CD4-positive, alpha-beta T cell (primary cell): ENCODE measurements at regions of chr6 and their contacts with region 1.

Region 1: DNA sequence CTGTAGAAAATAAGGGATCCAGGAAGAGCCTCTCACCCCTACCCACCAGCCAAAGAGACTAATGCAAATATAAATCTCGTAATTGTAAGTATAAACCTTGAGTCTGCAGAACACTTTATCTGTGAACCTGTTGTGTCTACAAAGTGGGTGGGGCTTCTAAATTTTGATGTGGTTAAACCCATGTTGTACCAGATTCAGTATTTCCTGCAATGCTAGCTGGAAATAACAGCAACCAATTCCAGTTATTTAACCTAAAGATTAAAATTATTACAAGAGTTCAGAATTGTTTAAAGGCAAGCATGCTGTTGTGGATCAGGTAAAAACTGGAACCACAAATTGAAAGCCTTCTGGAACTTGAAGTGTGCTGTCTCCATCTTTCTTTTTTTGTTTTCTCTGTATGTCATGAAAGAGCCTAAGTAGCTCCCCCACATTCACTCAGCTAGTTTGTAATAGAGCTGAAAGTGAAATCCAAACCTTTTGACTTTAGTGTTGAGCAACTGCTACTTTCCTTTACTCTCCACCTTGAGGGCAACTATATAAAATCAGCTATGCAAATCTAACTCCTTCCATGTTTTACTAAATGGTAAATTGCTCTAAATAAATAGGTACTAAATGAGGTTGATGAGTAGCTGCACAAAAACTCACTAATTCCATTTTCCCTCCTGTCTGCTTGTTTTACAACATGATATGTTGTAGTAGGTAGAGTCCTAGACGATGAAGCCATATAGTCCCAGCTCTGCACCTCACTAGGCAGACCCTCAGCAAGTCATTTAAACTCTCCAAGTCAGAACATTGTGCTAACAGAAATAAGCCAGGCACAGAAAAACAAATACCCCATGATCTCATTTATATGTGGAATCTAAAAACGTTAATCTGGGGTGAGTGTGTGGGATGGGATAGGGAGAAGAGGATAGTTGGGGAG is 17.9 kb upstream of the THEMIS start:
- DNase-seq: peak in 5 of 14 experiments; percentile 22 to 83 (median 72)
- ATAC-seq: peak; percentile 83
- H3K4me3 ChIP-seq: peak overlapping the region; percentile 64
- H3K4me3 Mint-ChIP-seq: peak overlapping the region; percentile 90
- H3K27ac ChIP-seq: peak overlapping the region; percentile 40 to 49
- H3K27ac Mint-ChIP-seq: peak overlapping the region; percentile 98
- H3K4me1 ChIP-seq: peaks cover 51% of the 10 kb centered on the region
- H3K4me1 Mint-ChIP-seq: peaks cover 89% of the 10 kb centered on the region
- H3K27me3 ChIP-seq: no peaks in the 10 kb centered on the region
- H3K27me3 Mint-ChIP-seq: no peaks in the 10 kb centered on the region
- CTCF ChIP-seq: no peak

Region 2: GRCh38 chr6:127539272-127539671 is 379.5 kb before region 1 on chr6:
- CTCF ChIA-PET with region 1: no interaction called
- POLR2A ChIA-PET with region 1: no interaction called
- intact Hi-C with region 1: no loop called
- DNase-seq: peak in 3 of 14 experiments; percentile 25 to 31 (median 28)
- ATAC-seq: peak; percentile 55
- H3K4me3 ChIP-seq: no peak overlapping the region
- H3K4me3 Mint-ChIP-seq: no peak overlapping the region
- H3K27ac ChIP-seq: no peak overlapping the region
- H3K27ac Mint-ChIP-seq: no peak overlapping the region
- H3K4me1 ChIP-seq: no peaks in the 10 kb centered on the region
- H3K4me1 Mint-ChIP-seq: no peaks in the 10 kb centered on the region
- H3K27me3 ChIP-seq: peaks cover 0 to 13% of the 10 kb centered on the region in 2 experiments
- H3K27me3 Mint-ChIP-seq: peaks cover 10% of the 10 kb centered on the region
- CTCF ChIP-seq: peak; percentile 67

Region 3: DNA sequence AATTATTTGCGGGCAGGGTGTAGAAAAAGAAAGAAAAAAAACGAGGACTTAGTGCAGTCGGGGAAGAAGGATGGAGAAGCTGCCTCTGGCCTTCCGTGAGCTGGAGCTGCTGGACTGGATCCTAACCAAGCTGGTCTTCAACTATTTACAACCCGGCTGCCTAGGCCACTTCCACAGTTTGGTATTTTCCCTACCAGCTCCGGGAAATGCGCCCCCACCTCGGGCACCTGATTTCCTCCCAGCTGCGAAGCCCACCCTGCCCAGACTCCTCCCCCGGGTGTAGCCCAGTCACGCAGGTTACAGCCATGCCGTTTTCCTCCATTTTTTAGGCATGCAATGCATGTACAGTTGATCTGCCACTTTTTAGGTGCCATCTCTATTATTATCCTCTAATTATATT is 39.1 kb before region 1 on chr6:
- CTCF ChIA-PET with region 1: interaction called, 3 read pairs
- POLR2A ChIA-PET with region 1: interaction called, 5 read pairs
- intact Hi-C with region 1: loop called (anchors 5 kb)
- DNase-seq: peak in 3 of 14 experiments; percentile 10 to 55 (median 36)
- ATAC-seq: peak; percentile 31
- H3K4me3 ChIP-seq: no peak overlapping the region
- H3K4me3 Mint-ChIP-seq: peak overlapping the region; percentile 69
- H3K27ac ChIP-seq: no peak overlapping the region
- H3K27ac Mint-ChIP-seq: peak overlapping the region; percentile 74
- H3K4me1 ChIP-seq: peaks cover 10% of the 10 kb centered on the region
- H3K4me1 Mint-ChIP-seq: peaks cover 89% of the 10 kb centered on the region
- H3K27me3 ChIP-seq: no peaks in the 10 kb centered on the region
- H3K27me3 Mint-ChIP-seq: no peaks in the 10 kb centered on the region
- CTCF ChIP-seq: no peak

Region 4: GRCh38 chr6:127907960-127908640 is 10.7 kb before region 1 on chr6:
- CTCF ChIA-PET with region 1: interaction called, 7 read pairs
- POLR2A ChIA-PET with region 1: interaction called, 81 read pairs
- intact Hi-C with region 1: loop called in 1 of 2 experiments (anchors 2 kb)
- DNase-seq: peak in 5 of 14 experiments; percentile 10 to 67 (median 53)
- ATAC-seq: peak; percentile 75
- H3K4me3 ChIP-seq: peak overlapping the region; percentile 62
- H3K4me3 Mint-ChIP-seq: peak overlapping the region; percentile 86
- H3K27ac ChIP-seq: peak overlapping the region in 1 of 2 donors; percentile 79
- H3K27ac Mint-ChIP-seq: peak overlapping the region; percentile 94
- H3K4me1 ChIP-seq: peaks cover 10% of the 10 kb centered on the region
- H3K4me1 Mint-ChIP-seq: peaks cover 71% of the 10 kb centered on the region
- H3K27me3 ChIP-seq: no peaks in the 10 kb centered on the region
- H3K27me3 Mint-ChIP-seq: no peaks in the 10 kb centered on the region
- CTCF ChIP-seq: no peak

Region 5: DNA sequence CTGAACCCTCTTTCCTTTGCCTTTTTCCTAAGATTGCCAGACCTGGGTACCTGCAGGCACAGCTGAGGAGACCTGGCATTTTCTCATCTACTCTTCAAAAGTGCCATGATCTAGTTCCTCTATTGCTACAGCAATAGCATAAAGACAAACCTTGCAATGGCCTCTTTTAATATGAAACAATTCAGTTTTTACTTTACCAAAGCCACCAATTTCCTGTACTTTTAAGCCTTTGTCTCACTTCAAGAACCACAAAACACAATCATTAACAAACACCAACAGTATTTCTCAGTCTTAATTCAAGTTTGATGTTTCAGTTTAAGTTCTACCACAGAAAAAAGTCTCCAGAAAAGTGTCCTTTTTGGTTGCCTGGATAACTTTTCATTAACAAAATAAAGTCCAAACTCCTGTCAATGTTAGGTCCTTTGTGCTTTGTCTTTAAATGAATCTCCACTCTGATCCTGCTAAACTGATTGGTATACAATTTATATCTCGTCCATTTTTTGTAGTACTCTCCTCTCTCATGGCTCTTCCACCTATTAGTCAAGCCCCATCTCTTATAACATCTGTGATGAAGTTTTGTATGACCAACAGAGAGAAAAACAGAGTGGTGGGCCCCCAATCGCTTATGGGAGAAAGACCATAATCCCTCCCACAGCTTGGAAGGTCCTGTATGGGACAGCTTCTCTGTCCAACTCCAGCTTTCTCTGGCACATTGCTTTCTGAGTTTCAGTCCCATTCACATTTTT is 32.6 kb after region 1 on chr6:
- CTCF ChIA-PET with region 1: interaction called, 3 read pairs
- POLR2A ChIA-PET with region 1: interaction called, 4 read pairs
- intact Hi-C with region 1: loop called in 1 of 2 experiments (anchors 2 kb)
- DNase-seq: peak in 3 of 14 experiments; percentile 53 to 79 (median 59)
- ATAC-seq: peak; percentile 80
- H3K4me3 ChIP-seq: peak overlapping the region; percentile 13
- H3K4me3 Mint-ChIP-seq: peak overlapping the region; percentile 62
- H3K27ac ChIP-seq: peak overlapping the region; percentile 36 to 42
- H3K27ac Mint-ChIP-seq: peak overlapping the region; percentile 85
- H3K4me1 ChIP-seq: peaks cover 28% of the 10 kb centered on the region
- H3K4me1 Mint-ChIP-seq: peaks cover 69% of the 10 kb centered on the region
- H3K27me3 ChIP-seq: no peaks in the 10 kb centered on the region
- H3K27me3 Mint-ChIP-seq: no peaks in the 10 kb centered on the region
- CTCF ChIP-seq: no peak